Gastrocnemius medialis (tissue), 4 donors: ENCODE measurements at regions of chr13 and their contacts with region 1.

Region 1: GRCh38 chr13:81442904-81443303 is 1102.0 kb upstream of the SPRY2 start:
- DNase-seq: no peak
- ATAC-seq: no peak
- H3K4me3 ChIP-seq: no peak overlapping the region
- H3K27ac ChIP-seq: no peak overlapping the region
- H3K4me1 ChIP-seq: no peaks in the 10 kb centered on the region
- H3K27me3 ChIP-seq: no peaks in the 10 kb centered on the region
- CTCF ChIP-seq: no peak
- POLR2A ChIP-seq: no peak

Region 2: GRCh38 chr13:81540777-81541176 is 97.9 kb after region 1 on chr13:
- in situ Hi-C with region 1: loop called in 1 of 4 experiments (anchors 25 kb)
- intact Hi-C with region 1: no loop called
- DNase-seq: no peak
- ATAC-seq: no peak
- H3K4me3 ChIP-seq: no peak overlapping the region
- H3K27ac ChIP-seq: no peak overlapping the region
- H3K4me1 ChIP-seq: no peaks in the 10 kb centered on the region
- H3K27me3 ChIP-seq: no peaks in the 10 kb centered on the region
- CTCF ChIP-seq: no peak
- POLR2A ChIP-seq: no peak

Region 3: DNA sequence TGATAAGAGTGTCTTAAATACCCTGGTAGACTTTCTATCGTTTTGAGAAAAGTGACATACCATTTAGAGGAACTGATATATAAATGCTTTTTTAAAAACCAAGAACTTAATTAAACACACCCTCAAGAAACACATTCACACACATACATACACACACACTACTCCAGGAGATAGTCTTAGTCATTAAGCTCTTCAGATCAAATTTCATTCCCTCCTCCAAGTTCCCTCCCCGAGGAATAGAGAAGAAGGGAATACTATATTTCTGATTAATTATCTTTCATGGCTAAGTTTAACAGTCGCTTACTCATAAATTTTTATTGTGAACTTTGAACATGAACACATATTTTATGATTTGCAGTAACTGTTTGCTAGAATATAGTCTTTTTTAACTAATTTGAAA is 1329.9 kb after region 1 on chr13:
- in situ Hi-C with region 1: no loop called
- intact Hi-C with region 1: no loop called
- DNase-seq: no peak
- ATAC-seq: no peak
- H3K4me3 ChIP-seq: no peak overlapping the region
- H3K27ac ChIP-seq: no peak overlapping the region
- H3K4me1 ChIP-seq: no peaks in the 10 kb centered on the region
- H3K27me3 ChIP-seq: no peaks in the 10 kb centered on the region
- CTCF ChIP-seq: no peak
- POLR2A ChIP-seq: no peak